Activated CD4-positive, alpha-beta T cell treated with anti-CD3 and anti-CD28 coated beads for 36 hours (primary cell): ENCODE measurements at regions of chr22 and their contacts with region 1.

Region 1: GRCh38 chr22:17084554-17085276 is at the start of gene IL17RA:
- DNase-seq: peak; percentile 96
- ATAC-seq: peak; percentile 96
- H3K4me3 Mint-ChIP-seq: peak within 1 kb of the TSS; percentile 80
- H3K27ac Mint-ChIP-seq: peak within 1 kb of the TSS; percentile 79
- H3K4me1 Mint-ChIP-seq: peaks cover 46% of the 10 kb centered on the region
- H3K27me3 Mint-ChIP-seq: no peaks in the 10 kb centered on the region
- total RNA-seq, gene IL17RA: 13.1 to 13.3 TPM

Region 2: GRCh38 chr22:17121227-17122195 is 36.8 kb after region 1 on chr22 and contains the start of gene TMEM121B:
- CTCF ChIA-PET with region 1: interaction called, 4 read pairs
- POLR2A ChIA-PET with region 1: no interaction called
- intact Hi-C with region 1: loop called in 1 of 2 experiments (anchors 1 kb)
- DNase-seq: peak; percentile 65
- ATAC-seq: peak; percentile 42
- H3K4me3 Mint-ChIP-seq: peak within 1 kb of the TSS; percentile 61
- H3K27ac Mint-ChIP-seq: no peak within 1 kb of the TSS
- H3K4me1 Mint-ChIP-seq: peaks cover 32% of the 10 kb centered on the region
- H3K27me3 Mint-ChIP-seq: peaks cover 19% of the 10 kb centered on the region
- total RNA-seq, gene TMEM121B: 0.14 to 0.19 TPM

Region 3: DNA sequence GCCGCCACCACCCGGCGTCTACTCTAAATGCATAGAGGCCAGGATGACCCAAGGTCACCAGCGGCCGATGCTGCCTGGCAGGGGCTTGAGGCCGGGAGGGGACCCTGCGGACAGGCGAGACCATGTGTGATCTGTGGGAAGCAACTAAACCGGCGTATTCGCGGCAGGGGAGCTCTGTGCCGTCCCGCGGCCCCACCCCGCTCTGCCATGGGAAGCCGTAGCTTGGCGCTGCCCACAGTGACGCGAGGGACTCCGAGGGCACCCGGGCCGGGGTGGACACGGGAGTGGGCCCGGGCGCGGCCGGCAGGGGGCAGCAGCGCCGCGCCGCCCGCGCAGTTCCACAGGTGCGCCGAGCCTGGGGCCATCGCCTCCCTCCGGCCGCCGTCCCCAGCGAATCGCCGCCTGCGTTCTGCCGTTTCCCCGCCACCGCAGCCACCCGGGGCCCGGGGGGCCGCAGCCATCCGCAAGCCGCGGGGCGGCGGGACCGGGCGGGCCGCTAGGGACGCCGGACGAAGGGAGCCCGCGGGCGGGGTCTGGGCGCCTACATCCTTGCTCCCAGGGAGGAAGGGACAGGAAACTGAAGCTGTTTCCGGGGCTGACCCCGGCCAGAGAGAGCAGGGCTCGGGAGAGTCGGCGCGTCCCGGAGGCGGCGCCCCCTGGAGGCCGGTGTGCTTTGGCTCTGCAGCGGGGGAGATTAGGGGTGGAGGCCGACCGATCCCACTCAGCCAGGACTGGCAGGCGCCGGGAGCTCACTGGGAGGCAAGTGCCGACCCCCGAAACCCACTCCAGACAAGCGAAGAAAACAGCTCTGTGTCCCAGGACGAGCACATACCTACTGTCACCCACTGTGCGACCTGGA is 86.8 kb after region 1 on chr22:
- CTCF ChIA-PET with region 1: interaction called, 15 read pairs
- POLR2A ChIA-PET with region 1: no interaction called
- intact Hi-C with region 1: loop called in 1 of 2 experiments (anchors 2 kb)
- DNase-seq: peak; percentile 91
- ATAC-seq: peak; percentile 91
- H3K4me3 Mint-ChIP-seq: peak overlapping the region; percentile 78
- H3K27ac Mint-ChIP-seq: peak overlapping the region; percentile 72
- H3K4me1 Mint-ChIP-seq: peaks cover 7% of the 10 kb centered on the region
- H3K27me3 Mint-ChIP-seq: no peaks in the 10 kb centered on the region

Region 4: DNA sequence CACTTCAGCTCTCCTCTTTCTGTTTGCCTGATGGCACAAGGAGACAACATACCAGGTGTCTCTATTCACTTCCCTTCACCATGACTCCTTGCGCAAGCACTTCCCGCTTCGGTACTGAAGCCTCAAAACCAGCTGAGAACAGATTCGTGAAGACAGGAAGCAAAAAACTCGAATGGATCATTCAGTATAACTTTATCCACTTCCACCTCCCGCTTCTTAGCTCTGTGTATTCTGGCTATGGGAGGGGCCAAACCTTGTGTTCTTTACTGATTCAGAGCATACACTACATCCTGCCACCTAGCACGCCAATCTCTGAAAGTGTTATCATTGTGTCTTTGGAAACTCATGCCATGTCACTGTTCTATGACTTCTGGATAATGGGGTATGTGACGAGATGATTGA is 196.7 kb after region 1 on chr22:
- CTCF ChIA-PET with region 1: no interaction called
- POLR2A ChIA-PET with region 1: no interaction called
- intact Hi-C with region 1: loop called (anchors 1 to 5 kb)
- DNase-seq: peak; percentile 61
- ATAC-seq: peak; percentile 85
- H3K4me3 Mint-ChIP-seq: peak overlapping the region; percentile 52
- H3K27ac Mint-ChIP-seq: peak overlapping the region; percentile 95
- H3K4me1 Mint-ChIP-seq: peaks cover 32% of the 10 kb centered on the region
- H3K27me3 Mint-ChIP-seq: peaks cover 5% of the 10 kb centered on the region

Region 5: GRCh38 chr22:17638432-17639246 is 553.9 kb after region 1 on chr22 and contains the start of gene BCL2L13:
- CTCF ChIA-PET with region 1: no interaction called
- POLR2A ChIA-PET with region 1: no interaction called
- intact Hi-C with region 1: loop called in 1 of 2 experiments (anchors 2 kb)
- DNase-seq: peak; percentile 94
- ATAC-seq: peak; percentile 96
- H3K4me3 Mint-ChIP-seq: peak within 1 kb of the TSS; percentile 88
- H3K27ac Mint-ChIP-seq: peak within 1 kb of the TSS; percentile 95
- H3K4me1 Mint-ChIP-seq: peaks cover 24% of the 10 kb centered on the region
- H3K27me3 Mint-ChIP-seq: no peaks in the 10 kb centered on the region
- total RNA-seq, gene BCL2L13: 34.1 to 34.5 TPM

Region 6: GRCh38 chr22:17773606-17774205 is 689.0 kb after region 1 on chr22:
- CTCF ChIA-PET with region 1: no interaction called
- POLR2A ChIA-PET with region 1: no interaction called
- intact Hi-C with region 1: loop called (anchors 2 to 5 kb)
- DNase-seq: peak; percentile 81
- ATAC-seq: peak; percentile 51
- H3K4me3 Mint-ChIP-seq: peak overlapping the region; percentile 75
- H3K27ac Mint-ChIP-seq: no peak overlapping the region
- H3K4me1 Mint-ChIP-seq: peaks cover 75% of the 10 kb centered on the region
- H3K27me3 Mint-ChIP-seq: peaks cover 2% of the 10 kb centered on the region